Activated CD8-positive, alpha-beta T cell treated with anti-CD3 and anti-CD28 coated beads for 36 hours (primary cell): ENCODE measurements at regions of chr20 and their contacts with region 1.

Region 1: DNA sequence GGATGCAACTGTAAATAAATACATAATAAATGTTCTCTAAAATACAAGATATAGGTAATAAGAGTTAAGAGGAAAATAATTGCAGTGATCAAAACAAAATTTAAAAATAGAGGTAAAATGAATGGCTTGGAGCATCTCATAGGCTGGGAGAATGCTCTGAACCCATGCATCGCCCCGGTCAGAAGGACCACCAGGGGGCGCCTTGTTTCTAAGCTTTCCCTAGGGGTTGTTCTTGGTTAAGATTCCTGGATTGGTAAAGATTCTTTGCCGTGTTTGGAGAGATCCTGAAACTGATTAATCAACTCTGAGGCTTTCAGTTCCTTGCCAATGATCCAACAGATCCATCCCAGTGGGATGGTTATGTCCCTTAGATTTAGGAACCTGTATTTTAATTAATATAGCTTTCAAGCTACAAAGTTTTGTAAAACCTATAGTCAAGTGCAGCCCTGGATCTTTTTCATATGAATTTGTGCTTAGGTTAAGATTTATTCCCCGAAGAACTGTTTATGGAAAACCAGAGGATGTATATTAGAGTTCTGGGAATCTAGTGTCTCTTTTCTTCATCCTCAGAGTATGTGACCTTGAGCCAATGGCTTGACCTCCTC is 45.3 kb upstream of the PRELID3B start:
- DNase-seq: peak; percentile 93
- ATAC-seq: peak; percentile 75
- H3K4me3 Mint-ChIP-seq: no peak overlapping the region
- H3K27ac Mint-ChIP-seq: no peak overlapping the region
- H3K4me1 Mint-ChIP-seq: peaks cover 4% of the 10 kb centered on the region
- H3K27me3 Mint-ChIP-seq: no peaks in the 10 kb centered on the region
- CTCF ChIP-seq: peak; percentile 98

Region 2: DNA sequence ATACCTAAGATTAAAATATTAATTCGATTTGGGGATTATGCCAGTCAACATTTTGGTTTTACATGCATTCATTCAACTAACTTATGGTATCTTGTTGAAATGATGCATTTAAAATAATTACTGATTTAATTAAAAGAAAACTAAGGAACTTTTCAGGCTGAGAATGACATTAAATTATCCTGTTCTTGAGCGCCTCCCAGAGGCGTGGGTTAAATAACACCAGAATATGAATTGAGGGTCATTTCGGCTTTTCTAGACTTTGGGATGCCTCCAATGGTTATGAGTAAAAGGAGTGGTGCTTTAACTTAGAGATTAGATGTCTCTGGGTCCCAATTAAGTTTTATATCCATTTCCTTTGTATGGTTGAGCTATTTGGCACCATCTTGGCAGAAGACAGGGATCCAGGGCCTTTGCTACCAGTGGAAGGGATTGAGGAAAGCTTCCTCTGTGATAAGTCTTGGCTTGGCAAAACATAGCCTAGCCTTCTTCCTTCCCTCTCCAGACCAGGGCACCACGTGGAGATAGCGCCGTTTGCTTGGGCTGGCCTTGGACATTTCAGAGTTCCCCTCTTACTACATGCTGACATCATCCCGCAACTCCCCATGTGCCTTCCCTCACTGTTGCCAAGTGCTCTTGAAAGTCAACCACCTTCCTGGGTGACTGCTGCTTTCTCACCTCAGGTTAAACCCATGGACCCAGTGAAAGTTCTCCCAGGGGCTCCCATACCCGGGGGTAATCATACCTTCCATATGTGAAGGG is 206.8 kb before region 1 on chr20:
- CTCF ChIA-PET with region 1: no interaction called
- POLR2A ChIA-PET with region 1: no interaction called
- intact Hi-C with region 1: no loop called
- DNase-seq: peak; percentile 47
- ATAC-seq: no peak
- H3K4me3 Mint-ChIP-seq: no peak overlapping the region
- H3K27ac Mint-ChIP-seq: no peak overlapping the region
- H3K4me1 Mint-ChIP-seq: peaks cover 32% of the 10 kb centered on the region
- H3K27me3 Mint-ChIP-seq: no peaks in the 10 kb centered on the region
- CTCF ChIP-seq: peak; percentile 56

Region 3: GRCh38 chr20:59055295-59055694 is 32.6 kb before region 1 on chr20:
- CTCF ChIA-PET with region 1: interaction called, 12 read pairs
- POLR2A ChIA-PET with region 1: no interaction called
- intact Hi-C with region 1: no loop called
- DNase-seq: peak; percentile 43
- ATAC-seq: no peak
- H3K4me3 Mint-ChIP-seq: no peak overlapping the region
- H3K27ac Mint-ChIP-seq: no peak overlapping the region
- H3K4me1 Mint-ChIP-seq: no peaks in the 10 kb centered on the region
- H3K27me3 Mint-ChIP-seq: peaks cover 21% of the 10 kb centered on the region
- CTCF ChIP-seq: peak; percentile 52

Region 4: GRCh38 chr20:59110607-59111006 is 22.7 kb after region 1 on chr20:
- CTCF ChIA-PET with region 1: interaction called, 48 read pairs
- POLR2A ChIA-PET with region 1: interaction called, 4 read pairs
- intact Hi-C with region 1: no loop called
- DNase-seq: no peak
- ATAC-seq: no peak
- H3K4me3 Mint-ChIP-seq: no peak overlapping the region
- H3K27ac Mint-ChIP-seq: no peak overlapping the region
- H3K4me1 Mint-ChIP-seq: no peaks in the 10 kb centered on the region
- H3K27me3 Mint-ChIP-seq: no peaks in the 10 kb centered on the region
- CTCF ChIP-seq: no peak

Region 5: DNA sequence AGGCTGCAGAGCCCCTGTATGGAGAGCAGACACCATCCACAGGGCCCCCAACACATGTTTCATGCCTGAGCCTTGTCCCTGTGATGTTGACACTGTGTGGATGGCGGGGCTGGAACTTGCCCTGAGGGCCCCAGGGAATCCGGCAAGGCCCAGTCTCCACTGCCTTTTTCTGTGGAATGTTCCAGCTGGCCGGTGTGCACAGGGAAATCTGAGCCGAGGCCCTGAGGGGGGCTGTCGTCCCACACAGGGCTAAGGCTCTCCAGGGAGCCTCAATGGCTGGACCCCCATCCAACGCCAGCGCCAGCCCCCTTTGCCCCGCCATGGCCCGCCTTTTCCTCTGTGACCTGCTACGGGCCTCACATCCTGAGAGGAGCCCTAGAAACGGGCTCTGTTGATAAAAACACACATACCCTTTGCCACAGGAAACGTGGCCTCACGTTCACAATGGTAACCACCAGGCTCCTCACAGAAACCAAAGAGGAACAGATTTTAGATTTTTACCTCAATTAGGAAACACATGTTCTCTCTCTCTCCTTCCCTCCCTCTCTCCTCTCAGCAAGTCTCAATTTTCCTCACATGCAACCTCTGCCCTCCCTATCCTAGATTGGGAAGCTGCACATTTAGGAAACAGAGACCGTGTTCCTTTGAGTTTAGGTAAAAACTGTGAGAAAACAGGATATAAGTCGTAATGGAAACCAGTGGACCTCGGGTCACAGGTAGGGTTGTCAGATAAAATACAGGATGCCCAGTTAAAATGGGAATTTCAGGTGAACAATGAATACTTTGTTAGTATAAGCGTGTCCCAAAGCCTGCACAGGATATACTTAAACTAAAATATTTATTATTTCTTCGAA is 61.9 kb after region 1 on chr20:
- CTCF ChIA-PET with region 1: interaction called, 13 read pairs
- POLR2A ChIA-PET with region 1: interaction called, 3 read pairs
- intact Hi-C with region 1: no loop called
- DNase-seq: peak; percentile 90
- ATAC-seq: peak; percentile 61
- H3K4me3 Mint-ChIP-seq: peak overlapping the region; percentile 54
- H3K27ac Mint-ChIP-seq: peak overlapping the region; percentile 95
- H3K4me1 Mint-ChIP-seq: peaks cover 85% of the 10 kb centered on the region
- H3K27me3 Mint-ChIP-seq: no peaks in the 10 kb centered on the region
- CTCF ChIP-seq: no peak

Region 6: GRCh38 chr20:59191756-59192532 is 104.0 kb after region 1 on chr20:
- CTCF ChIA-PET with region 1: interaction called, 13 read pairs
- POLR2A ChIA-PET with region 1: interaction called, 3 read pairs
- intact Hi-C with region 1: no loop called
- DNase-seq: no peak
- ATAC-seq: no peak
- H3K4me3 Mint-ChIP-seq: no peak overlapping the region
- H3K27ac Mint-ChIP-seq: no peak overlapping the region
- H3K4me1 Mint-ChIP-seq: peaks cover 5% of the 10 kb centered on the region
- H3K27me3 Mint-ChIP-seq: no peaks in the 10 kb centered on the region
- CTCF ChIP-seq: no peak

Region 7: DNA sequence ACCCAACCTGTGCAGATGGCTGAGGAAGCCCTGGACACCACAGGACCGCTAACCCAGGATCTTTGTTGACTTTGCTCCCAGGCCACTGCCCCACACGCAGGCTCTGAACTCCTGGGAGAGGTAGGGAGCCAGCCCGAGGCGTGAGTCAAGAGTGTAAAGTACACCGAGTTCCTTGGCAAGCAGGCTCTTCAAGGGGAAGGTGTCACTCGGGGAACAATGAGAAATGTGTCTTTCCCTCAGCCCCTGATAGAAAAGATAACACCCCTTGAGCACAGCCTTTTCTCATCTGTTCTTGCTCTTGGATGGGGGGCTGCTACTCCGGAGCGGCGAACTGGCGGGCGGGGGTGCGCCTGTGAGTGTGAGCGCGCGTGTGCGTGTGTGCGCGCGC is 212.0 kb after region 1 on chr20:
- CTCF ChIA-PET with region 1: no interaction called
- POLR2A ChIA-PET with region 1: no interaction called
- intact Hi-C with region 1: no loop called
- DNase-seq: no peak
- ATAC-seq: no peak
- H3K4me3 Mint-ChIP-seq: no peak overlapping the region
- H3K27ac Mint-ChIP-seq: no peak overlapping the region
- H3K4me1 Mint-ChIP-seq: peaks cover 7% of the 10 kb centered on the region
- H3K27me3 Mint-ChIP-seq: peaks cover 36% of the 10 kb centered on the region
- CTCF ChIP-seq: no peak

Region 8: GRCh38 chr20:59403261-59403961 is 315.5 kb after region 1 on chr20:
- CTCF ChIA-PET with region 1: interaction called, 13 read pairs
- POLR2A ChIA-PET with region 1: no interaction called
- intact Hi-C with region 1: no loop called
- DNase-seq: peak; percentile 78
- ATAC-seq: peak; percentile 83
- H3K4me3 Mint-ChIP-seq: no peak overlapping the region
- H3K27ac Mint-ChIP-seq: peak overlapping the region; percentile 44
- H3K4me1 Mint-ChIP-seq: peaks cover 2% of the 10 kb centered on the region
- H3K27me3 Mint-ChIP-seq: peaks cover 9% of the 10 kb centered on the region
- CTCF ChIP-seq: peak; percentile 100